Cardiac septum (tissue), 1 donor: ENCODE measurements at regions of chr7 and their contacts with region 1.

Region 1: GRCh38 chr7:132500727-132501440 is 75.4 kb downstream of the PLXNA4 start:
- DNase-seq: no peak

Region 2: DNA sequence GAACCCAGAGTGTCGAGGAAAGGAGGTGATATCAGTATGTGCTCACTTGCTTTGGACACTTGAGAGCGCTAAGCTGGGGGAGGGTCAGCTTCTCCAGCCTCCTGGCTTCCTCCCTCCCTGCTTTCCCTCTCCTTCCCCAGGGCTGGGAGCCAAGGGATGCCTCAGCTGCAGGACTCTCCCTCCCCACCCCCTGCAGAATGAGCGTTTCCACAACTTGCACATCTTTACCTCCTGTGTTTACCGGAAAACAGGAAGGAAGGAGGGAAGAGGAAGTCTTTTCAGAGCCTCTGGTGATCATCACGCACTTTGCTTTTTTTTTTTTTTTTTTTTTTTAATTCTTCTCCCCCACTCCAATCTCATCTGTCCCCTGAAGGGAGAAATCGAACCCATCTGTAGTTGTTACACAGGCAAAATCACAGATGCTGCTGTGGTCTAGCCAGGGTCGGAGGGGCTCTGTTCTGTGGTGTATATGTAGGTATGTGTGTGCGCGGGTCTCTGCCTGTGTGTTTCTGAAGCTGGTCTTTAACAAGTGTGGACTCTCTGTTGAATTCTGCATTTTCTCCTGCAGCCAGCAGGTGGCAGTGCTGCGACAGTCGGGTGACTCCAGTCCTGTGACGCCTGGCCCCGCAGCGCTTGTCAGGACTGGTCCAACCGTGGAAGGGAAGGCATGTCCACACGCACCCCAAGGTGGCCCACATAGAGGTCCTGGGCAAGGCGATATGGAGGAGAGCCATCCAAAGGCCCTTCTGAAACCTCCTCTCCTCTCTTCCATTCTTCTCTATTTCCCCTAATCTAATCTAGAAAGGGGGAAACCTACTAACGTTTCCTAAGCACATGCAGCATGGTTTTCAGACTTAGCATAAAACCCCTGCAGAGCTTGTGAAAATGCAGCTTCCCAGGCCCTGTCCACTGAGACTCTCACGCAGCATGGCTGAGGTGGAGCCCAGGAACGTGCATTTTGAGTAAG is 182.2 kb before region 1 on chr7:
- intact Hi-C with region 1: loop called (anchors 5 kb)
- DNase-seq: peak; percentile 91

Region 3: DNA sequence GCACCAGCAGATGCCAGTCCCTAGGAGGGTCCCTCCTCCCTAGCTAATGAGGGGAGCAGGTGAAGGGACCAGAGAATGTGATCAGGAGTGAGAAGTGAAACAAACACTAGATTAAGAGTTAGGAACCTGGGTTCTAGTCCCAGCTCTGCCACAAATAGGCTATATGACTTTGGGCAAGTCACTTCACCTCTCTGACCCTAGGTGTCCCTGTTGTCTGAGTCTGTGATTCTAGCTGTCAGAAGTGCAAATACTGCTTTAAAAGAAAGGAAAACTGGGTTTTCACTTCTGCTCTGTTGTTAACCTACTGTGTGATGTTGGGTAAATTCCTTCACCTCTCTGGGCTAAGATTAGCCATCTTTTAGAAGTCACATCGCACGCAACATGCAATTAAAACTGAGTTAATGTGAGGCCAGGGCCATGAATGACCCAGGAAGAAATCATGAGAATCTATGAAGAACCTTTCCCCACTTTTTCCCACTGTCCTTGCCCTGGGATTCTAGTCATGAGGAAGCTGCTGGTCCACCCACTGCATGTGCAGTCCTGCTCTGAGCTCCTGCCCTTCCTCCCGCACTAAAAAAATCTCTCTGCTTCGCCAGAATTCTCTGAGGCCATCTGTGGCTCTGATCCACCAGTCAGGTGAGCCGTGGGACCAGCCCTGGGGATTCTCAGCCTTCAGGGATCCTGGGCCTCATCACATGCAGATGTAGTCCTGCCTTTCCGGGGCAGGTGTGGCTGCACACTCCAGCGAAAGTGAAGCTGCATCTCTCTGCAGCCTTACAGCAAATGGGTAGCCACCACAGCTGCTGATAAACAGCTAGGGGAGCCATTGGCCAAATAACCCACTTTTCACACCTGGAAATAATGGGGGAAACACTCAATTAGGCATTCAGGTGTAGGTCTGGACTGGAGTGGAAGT is 106.3 kb before region 1 on chr7:
- intact Hi-C with region 1: loop called (anchors 5 kb)
- DNase-seq: peak; percentile 57

Region 4: DNA sequence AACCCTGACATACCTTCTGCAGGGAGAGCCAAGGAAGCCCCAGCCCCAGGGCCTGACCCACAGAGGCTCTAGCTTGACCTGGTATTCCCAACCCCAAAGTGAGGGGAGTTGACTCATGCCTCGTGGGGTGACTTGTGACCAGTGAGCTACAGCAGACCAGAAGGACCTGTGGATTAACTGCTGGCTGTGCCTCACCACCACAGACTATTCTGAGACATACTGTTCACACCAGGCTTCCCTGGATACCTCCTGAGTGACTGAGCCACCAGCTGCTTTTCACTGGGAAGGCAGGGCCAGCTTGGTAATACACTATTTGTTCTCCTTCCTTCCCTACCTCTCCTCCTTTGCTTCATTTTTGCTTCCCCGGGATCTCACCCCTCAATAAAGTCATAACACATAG is 68.1 kb after region 1 on chr7:
- intact Hi-C with region 1: no loop called
- DNase-seq: no peak